GM13977 (cell line): ENCODE measurements at regions of chr13 and their contacts with region 1.

Region 1: GRCh38 chr13:43085545-43085944 is 62.2 kb downstream of the DNAJC15 start:
- DNase-seq: no peak
- CTCF ChIP-seq: peak; percentile 37

Region 2: DNA sequence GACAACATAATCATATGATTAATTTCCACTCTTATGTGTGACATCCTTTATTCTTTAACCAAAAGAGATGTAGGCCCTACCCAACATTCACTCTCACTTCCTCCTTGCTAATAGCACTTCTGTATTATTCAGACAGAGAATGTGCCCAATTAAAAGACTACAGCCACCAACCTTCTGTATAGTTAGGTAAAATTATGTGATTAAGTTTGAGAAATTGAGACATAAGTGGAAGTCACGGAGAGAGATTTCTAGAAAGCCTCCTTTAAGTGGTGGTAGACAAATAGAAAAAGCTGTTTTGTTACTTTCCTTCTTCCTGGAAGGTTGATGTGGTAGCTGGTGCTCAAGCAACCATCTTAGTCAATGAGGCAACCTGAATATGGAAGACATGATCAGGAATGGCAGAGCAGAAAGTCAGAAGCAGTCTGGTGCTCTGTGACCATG is 108.3 kb before region 1 on chr13:
- in situ Hi-C with region 1: no loop called
- DNase-seq: peak; percentile 32
- CTCF ChIP-seq: no peak

Region 3: DNA sequence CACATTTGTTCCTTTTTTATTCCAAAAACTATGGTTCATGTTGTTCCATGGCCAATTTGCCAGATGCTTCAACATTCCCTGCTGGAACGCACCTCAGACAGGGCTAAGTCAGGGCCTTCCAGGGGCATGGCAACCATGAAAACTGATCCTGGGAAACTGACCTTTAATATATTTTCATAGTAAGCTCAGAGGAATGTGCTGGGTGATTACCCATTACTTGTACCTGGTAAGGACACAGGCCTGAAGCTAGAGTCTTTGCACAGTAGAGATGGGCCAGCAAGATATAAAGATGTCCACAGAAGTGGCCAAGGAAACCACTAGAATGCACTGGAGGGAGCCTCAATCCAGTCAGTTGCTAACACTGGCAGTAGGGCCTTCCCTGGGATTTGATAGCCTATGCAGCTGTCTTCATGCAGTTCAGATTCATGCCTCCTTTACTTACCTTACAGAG is 348.2 kb after region 1 on chr13:
- in situ Hi-C with region 1: no loop called
- DNase-seq: no peak
- CTCF ChIP-seq: no peak

Region 4: DNA sequence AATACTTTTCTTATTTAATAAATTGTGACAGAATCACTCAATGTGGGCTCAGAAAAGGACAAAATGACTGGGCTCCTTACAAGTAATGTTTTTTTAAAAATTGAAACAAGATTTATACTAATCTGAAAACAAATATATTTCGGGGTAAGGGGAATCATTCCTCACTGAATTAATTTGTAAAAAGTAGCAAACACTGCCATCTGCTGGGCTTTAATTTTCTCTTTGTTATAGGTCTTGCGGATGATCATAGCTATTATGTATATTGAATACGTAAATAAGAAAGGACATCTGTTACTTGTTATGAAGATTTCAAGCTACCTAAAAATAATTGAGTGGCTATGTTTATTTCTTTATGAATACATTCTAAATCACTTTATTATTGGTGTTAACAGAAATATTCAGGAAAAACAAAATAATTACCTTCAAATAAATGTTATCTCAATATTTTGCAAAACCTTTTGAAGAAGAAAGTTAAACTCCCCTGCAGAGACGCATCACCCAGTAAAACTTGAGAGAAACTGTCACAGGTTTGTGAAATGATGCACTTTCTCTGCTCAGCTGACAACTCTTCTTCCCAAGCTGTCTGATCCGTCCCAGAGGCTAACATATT is 719.0 kb after region 1 on chr13:
- in situ Hi-C with region 1: loop called (anchors 25 kb)
- DNase-seq: peak; percentile 45
- CTCF ChIP-seq: peak; percentile 47